Naive thymus-derived CD4-positive, alpha-beta T cell (primary cell): ENCODE measurements at regions of chr15 and their contacts with region 1.

Region 1: GRCh38 chr15:73991726-73992593 is at the start of gene STOML1:
- DNase-seq: peak; percentile 85 to 99 (median 91)
- ATAC-seq: peak; percentile 91
- H3K4me3 ChIP-seq: peak within 1 kb of the TSS; percentile 68
- H3K4me3 Mint-ChIP-seq: peak within 1 kb of the TSS; percentile 82 to 100 (median 98)
- H3K27ac ChIP-seq: peak within 1 kb of the TSS; percentile 90
- H3K27ac Mint-ChIP-seq: peak within 1 kb of the TSS; percentile 72 to 99 (median 87)
- H3K4me1 ChIP-seq: peaks cover 33 to 35% of the 10 kb centered on the region in 2 donors
- H3K4me1 Mint-ChIP-seq: peaks cover 28 to 62% (median 49%) of the 10 kb centered on the region in 7 donors
- H3K27me3 ChIP-seq: no peaks in the 10 kb centered on the region
- H3K27me3 Mint-ChIP-seq: no peaks in the 10 kb centered on the region
- total RNA-seq, gene STOML1: 7.5 to 14.5 (median 12.3) TPM

Region 2: GRCh38 chr15:73927476-73928240 is 64.3 kb before region 1 on chr15:
- CTCF ChIA-PET with region 1: no interaction called
- POLR2A ChIA-PET with region 1: no interaction called
- intact Hi-C with region 1: loop called in 1 of 2 experiments (anchors 1 kb)
- DNase-seq: peak; percentile 69 to 86 (median 84)
- ATAC-seq: peak; percentile 93
- H3K4me3 ChIP-seq: peak overlapping the region; percentile 74
- H3K4me3 Mint-ChIP-seq: peak overlapping the region; percentile 62 to 83 (median 74)
- H3K27ac ChIP-seq: peak overlapping the region; percentile 77
- H3K27ac Mint-ChIP-seq: peak overlapping the region; percentile 26 to 69 (median 51)
- H3K4me1 ChIP-seq: peaks cover 15 to 21% of the 10 kb centered on the region in 2 donors
- H3K4me1 Mint-ChIP-seq: peaks cover 25 to 55% (median 39%) of the 10 kb centered on the region in 7 donors
- H3K27me3 ChIP-seq: no peaks in the 10 kb centered on the region
- H3K27me3 Mint-ChIP-seq: peaks cover 0 to 6% (median 0%) of the 10 kb centered on the region in 5 donors

Region 3: GRCh38 chr15:73964736-73965093 is 27.2 kb before region 1 on chr15:
- CTCF ChIA-PET with region 1: interaction called, 11 read pairs
- POLR2A ChIA-PET with region 1: interaction called, 6 read pairs
- intact Hi-C with region 1: loop called in 1 of 2 experiments (anchors 2 kb)
- DNase-seq: peak; percentile 74 to 89 (median 83)
- ATAC-seq: peak; percentile 95
- H3K4me3 ChIP-seq: peak overlapping the region; percentile 75
- H3K4me3 Mint-ChIP-seq: peak overlapping the region; percentile 75 to 90 (median 84)
- H3K27ac ChIP-seq: peak overlapping the region; percentile 33
- H3K27ac Mint-ChIP-seq: peak overlapping the region; percentile 46 to 94 (median 88)
- H3K4me1 ChIP-seq: peaks cover 15 to 25% of the 10 kb centered on the region in 2 donors
- H3K4me1 Mint-ChIP-seq: peaks cover 23 to 52% (median 45%) of the 10 kb centered on the region in 7 donors
- H3K27me3 ChIP-seq: no peaks in the 10 kb centered on the region
- H3K27me3 Mint-ChIP-seq: peaks cover 0 to 4% (median 0%) of the 10 kb centered on the region in 5 donors

Region 4: DNA sequence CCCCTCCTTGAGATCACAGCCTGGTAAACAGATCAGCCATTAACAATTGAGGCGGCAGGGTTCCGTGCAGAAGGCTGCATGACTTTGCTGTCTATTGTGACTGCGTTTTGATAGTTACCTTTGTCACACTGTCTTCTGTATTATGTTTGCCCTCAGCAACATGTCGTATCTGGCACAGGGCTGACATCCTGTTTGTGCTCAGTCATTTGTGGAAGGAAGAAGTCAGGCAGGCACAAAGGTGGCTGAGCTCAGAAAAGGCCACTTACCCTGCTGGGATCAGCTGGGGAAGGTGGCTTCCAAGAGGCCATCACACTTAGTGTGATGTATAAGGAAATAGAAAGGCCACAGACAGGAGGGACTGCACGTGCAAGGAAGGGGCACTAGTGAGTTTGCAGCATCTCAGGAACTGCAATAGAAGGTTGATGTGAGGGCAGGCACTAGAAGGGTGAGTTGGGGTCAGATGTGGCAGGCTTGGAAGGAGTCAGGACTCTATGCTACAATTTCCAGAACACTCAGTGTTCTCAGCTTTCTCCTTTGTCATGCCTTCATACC is 15.9 kb after region 1 on chr15:
- CTCF ChIA-PET with region 1: interaction called, 10 read pairs
- POLR2A ChIA-PET with region 1: interaction called, 62 read pairs
- intact Hi-C with region 1: loop called in 1 of 2 experiments (anchors 1 kb)
- DNase-seq: peak in 6 of 9 donors; percentile 24 to 54 (median 44)
- ATAC-seq: peak; percentile 67
- H3K4me3 ChIP-seq: no peak overlapping the region
- H3K4me3 Mint-ChIP-seq: peak overlapping the region; percentile 58 to 88 (median 72)
- H3K27ac ChIP-seq: peak overlapping the region; percentile 56
- H3K27ac Mint-ChIP-seq: peak overlapping the region; percentile 82 to 97 (median 88)
- H3K4me1 ChIP-seq: peaks cover 11 to 35% of the 10 kb centered on the region in 2 donors
- H3K4me1 Mint-ChIP-seq: peaks cover 37 to 78% (median 73%) of the 10 kb centered on the region in 7 donors
- H3K27me3 ChIP-seq: no peaks in the 10 kb centered on the region
- H3K27me3 Mint-ChIP-seq: no peaks in the 10 kb centered on the region

Region 5: DNA sequence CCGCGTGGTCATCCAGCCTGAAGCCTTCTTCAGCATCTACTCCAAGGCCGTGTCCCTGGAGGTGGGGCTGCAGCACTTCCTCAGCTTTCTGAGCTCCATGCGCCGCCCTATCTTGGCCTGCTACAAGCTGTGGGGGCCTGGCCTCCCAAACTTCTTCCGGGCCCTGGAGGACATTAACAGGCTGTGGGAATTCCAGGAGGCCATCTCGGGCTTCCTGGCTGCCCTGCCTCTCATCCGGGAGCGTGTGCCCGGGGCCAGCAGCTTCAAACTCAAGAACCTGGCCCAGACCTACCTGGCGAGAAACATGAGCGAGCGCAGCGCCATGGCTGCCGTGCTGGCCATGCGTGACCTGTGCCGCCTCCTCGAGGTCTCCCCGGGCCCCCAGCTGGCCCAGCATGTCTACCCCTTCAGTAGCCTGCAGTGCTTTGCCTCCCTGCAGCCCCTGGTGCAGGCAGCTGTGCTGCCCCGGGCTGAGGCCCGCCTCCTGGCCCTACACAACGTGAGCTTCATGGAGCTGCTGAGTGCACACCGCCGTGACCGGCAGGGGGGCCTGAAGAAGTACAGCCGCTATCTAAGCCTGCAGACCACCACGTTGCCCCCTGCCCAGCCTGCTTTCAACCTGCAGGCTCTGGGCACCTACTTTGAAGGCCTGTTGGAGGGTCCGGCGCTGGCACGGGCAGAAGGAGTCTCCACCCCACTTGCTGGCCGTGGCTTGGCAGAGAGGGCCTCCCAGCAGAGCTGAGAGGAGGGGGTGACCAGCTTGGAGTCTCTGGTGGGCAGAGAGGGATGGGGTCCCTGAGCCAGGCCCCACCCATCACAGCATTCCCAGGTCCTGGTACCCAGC is 52.5 kb after region 1 on chr15:
- CTCF ChIA-PET with region 1: interaction called, 4 read pairs
- POLR2A ChIA-PET with region 1: no interaction called
- intact Hi-C with region 1: loop called in 1 of 2 experiments (anchors 5 kb)
- DNase-seq: no peak
- ATAC-seq: no peak
- H3K4me3 ChIP-seq: no peak overlapping the region
- H3K4me3 Mint-ChIP-seq: no peak overlapping the region
- H3K27ac ChIP-seq: no peak overlapping the region
- H3K27ac Mint-ChIP-seq: no peak overlapping the region
- H3K4me1 ChIP-seq: peaks cover 8 to 14% of the 10 kb centered on the region in 2 donors
- H3K4me1 Mint-ChIP-seq: peaks cover 7 to 17% (median 11%) of the 10 kb centered on the region in 7 donors
- H3K27me3 ChIP-seq: no peaks in the 10 kb centered on the region
- H3K27me3 Mint-ChIP-seq: no peaks in the 10 kb centered on the region

Region 6: GRCh38 chr15:74240002-74240568 is 248.1 kb after region 1 on chr15:
- CTCF ChIA-PET with region 1: no interaction called
- POLR2A ChIA-PET with region 1: no interaction called
- intact Hi-C with region 1: no loop called
- DNase-seq: no peak
- ATAC-seq: no peak
- H3K4me3 ChIP-seq: no peak overlapping the region
- H3K4me3 Mint-ChIP-seq: no peak overlapping the region
- H3K27ac ChIP-seq: no peak overlapping the region
- H3K27ac Mint-ChIP-seq: no peak overlapping the region
- H3K4me1 ChIP-seq: no peaks in the 10 kb centered on the region
- H3K4me1 Mint-ChIP-seq: peaks cover 0 to 9% (median 7%) of the 10 kb centered on the region in 7 donors
- H3K27me3 ChIP-seq: no peaks in the 10 kb centered on the region
- H3K27me3 Mint-ChIP-seq: peaks cover 19 to 39% (median 29%) of the 10 kb centered on the region in 5 donors

Region 7: GRCh38 chr15:74787251-74788041 is 795.5 kb after region 1 on chr15:
- CTCF ChIA-PET with region 1: no interaction called
- POLR2A ChIA-PET with region 1: no interaction called
- intact Hi-C with region 1: loop called in 1 of 2 experiments (anchors 10 kb)
- DNase-seq: peak; percentile 69 to 97 (median 96)
- ATAC-seq: peak; percentile 85
- H3K4me3 ChIP-seq: peak overlapping the region; percentile 85
- H3K4me3 Mint-ChIP-seq: peak overlapping the region; percentile 87 to 97 (median 93)
- H3K27ac ChIP-seq: peak overlapping the region; percentile 92
- H3K27ac Mint-ChIP-seq: peak overlapping the region; percentile 95 to 99 (median 98)
- H3K4me1 ChIP-seq: peaks cover 66 to 72% of the 10 kb centered on the region in 2 donors
- H3K4me1 Mint-ChIP-seq: peaks cover 57 to 78% (median 75%) of the 10 kb centered on the region in 7 donors
- H3K27me3 ChIP-seq: no peaks in the 10 kb centered on the region
- H3K27me3 Mint-ChIP-seq: no peaks in the 10 kb centered on the region